Activated T-helper 1 cell treated with anti-CD3 and anti-CD28 coated beads, Interleukin-12 subunit alpha, Interleukin-12 subunit beta, Interleukin-2, Interleukin-4 antibody, amounts not matched to agents 30 ng/mL and 10 ng/mL and 1 ng/mL, durations not matched to agents 14 hours and 24 hours and 36 hours (primary cell): ENCODE measurements at regions of chr3 and their contacts with region 1.

Region 1: DNA sequence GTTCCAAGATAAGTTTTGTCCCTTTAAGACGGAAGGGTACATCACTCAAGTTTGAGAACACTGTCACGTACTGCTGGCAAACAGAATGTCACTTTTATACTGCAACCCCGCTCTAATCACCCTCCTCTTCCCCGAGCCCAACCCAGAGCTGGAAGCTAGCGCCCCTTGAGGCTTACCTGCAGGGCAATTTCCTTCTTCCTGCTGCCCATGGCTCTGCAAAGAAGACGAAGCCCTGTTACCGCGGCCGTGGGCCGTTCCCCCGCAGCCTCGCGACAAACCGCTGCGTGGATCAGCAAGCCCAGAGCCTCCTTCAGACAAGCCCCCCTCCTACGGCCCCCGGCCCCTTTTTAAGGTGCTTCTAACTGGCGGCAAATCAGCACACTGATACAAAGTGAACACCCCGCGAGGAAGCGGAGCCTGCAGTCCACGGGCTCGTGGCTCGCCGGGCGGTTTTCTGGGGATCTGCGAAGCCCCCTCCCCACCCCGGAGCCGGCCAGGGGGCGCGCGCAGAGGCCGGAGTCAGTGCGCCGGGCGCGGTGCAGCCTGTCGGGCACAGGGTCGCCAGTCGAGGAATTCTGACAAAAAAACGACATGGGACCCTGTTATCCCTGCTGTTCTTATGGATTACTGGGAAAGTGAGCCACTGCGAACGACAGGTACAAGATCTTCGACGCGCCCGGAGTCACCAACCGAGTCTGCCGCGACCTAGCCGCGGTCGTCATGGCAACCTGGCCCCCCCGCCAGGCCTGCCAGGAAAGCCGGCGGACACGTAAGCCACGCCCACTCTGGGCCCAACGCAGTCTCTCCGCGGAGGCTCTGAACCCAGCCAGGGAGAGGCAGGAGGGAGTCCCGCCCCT is at the start of gene NME9:
- DNase-seq: peak; percentile 83
- H3K4me3 Mint-ChIP-seq: peak within 1 kb of the TSS; percentile 87
- H3K27ac Mint-ChIP-seq: peak within 1 kb of the TSS; percentile 68
- H3K4me1 Mint-ChIP-seq: peaks cover 33% of the 10 kb centered on the region
- H3K27me3 Mint-ChIP-seq: peaks cover 2% of the 10 kb centered on the region
- total RNA-seq, gene NME9: not detected in 2 replicates

Region 2: GRCh38 chr3:138180375-138181029 is 148.9 kb before region 1 on chr3:
- intact Hi-C with region 1: loop called (anchors 1 kb)
- DNase-seq: no peak
- H3K4me3 Mint-ChIP-seq: no peak overlapping the region
- H3K27ac Mint-ChIP-seq: no peak overlapping the region
- H3K4me1 Mint-ChIP-seq: peaks cover 5% of the 10 kb centered on the region
- H3K27me3 Mint-ChIP-seq: peaks cover 12% of the 10 kb centered on the region

Region 3: GRCh38 chr3:138347960-138348753 is 18.8 kb after region 1 on chr3 and contains the start of gene MRAS:
- intact Hi-C with region 1: loop called (anchors 1 kb)
- DNase-seq: no peak
- H3K4me3 Mint-ChIP-seq: peak within 1 kb of the TSS; percentile 93
- H3K27ac Mint-ChIP-seq: peak within 1 kb of the TSS; percentile 69
- H3K4me1 Mint-ChIP-seq: peaks cover 12% of the 10 kb centered on the region
- H3K27me3 Mint-ChIP-seq: peaks cover 36% of the 10 kb centered on the region
- total RNA-seq, gene MRAS: 0.05 and 0.42 TPM in 2 replicates

Region 4: DNA sequence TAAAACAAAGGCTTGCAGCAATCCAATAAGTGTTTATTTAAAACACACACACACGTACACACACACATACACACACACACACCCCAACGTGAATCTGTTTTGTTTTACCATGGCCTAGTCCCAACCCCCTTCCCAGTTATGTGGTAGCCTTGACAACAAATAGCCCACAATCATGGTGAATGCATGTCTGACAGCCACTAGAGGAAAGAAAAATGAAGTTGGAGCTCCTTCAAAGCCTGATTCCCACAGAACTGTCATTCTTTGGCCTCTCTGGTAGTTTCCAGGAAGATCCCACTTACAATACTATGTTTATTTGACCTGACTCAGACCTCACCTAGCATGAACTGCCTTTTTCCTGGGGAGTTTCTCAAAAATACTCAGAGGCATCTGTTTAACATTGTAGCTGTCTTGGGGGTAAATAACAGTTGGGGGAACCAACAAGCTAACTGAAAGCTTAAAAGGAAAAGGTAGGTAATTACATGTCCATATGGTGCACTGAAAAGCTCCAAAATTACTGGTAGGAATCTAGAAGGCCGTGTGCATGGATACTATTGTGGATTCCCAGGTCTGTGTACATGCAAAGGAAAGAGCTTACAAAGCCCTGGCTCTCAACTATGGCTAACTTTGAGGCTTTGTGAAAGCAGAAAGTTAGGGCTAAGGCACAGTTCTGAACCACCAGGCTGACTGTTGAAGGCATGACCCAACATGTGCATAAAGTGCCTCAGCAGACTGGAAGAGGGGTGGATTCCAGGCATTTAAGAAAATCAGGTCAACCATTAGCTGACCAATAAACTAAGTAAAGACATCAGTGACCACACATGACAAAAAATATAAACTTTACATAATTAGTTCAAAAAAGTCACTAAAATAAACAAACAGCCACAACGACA is 344.5 kb after region 1 on chr3:
- intact Hi-C with region 1: no loop called
- DNase-seq: no peak
- H3K4me3 Mint-ChIP-seq: no peak overlapping the region
- H3K27ac Mint-ChIP-seq: no peak overlapping the region
- H3K4me1 Mint-ChIP-seq: no peaks in the 10 kb centered on the region
- H3K27me3 Mint-ChIP-seq: no peaks in the 10 kb centered on the region